CD8-positive, alpha-beta T cell (primary cell): ENCODE measurements at regions of chr19 and their contacts with region 1.

Region 1: GRCh38 chr19:39792999-39793546 is 14.4 kb downstream of the LEUTX start:
- DNase-seq: peak; percentile 52 to 83 (median 74)
- ATAC-seq: peak; percentile 94
- H3K4me3 ChIP-seq: peak overlapping the region; percentile 53 to 74
- H3K4me3 Mint-ChIP-seq: peak overlapping the region; percentile 76
- H3K27ac ChIP-seq: no peak overlapping the region
- H3K27ac Mint-ChIP-seq: no peak overlapping the region
- H3K4me1 ChIP-seq: no peaks in the 10 kb centered on the region
- H3K4me1 Mint-ChIP-seq: peaks cover 2% of the 10 kb centered on the region
- H3K27me3 ChIP-seq: no peaks in the 10 kb centered on the region
- H3K27me3 Mint-ChIP-seq: peaks cover 5% of the 10 kb centered on the region
- CTCF ChIP-seq: peak; percentile 85

Region 2: GRCh38 chr19:39824143-39825092 is 31.3 kb after region 1 on chr19:
- CTCF ChIA-PET with region 1: interaction called, 7 read pairs
- POLR2A ChIA-PET with region 1: no interaction called
- intact Hi-C with region 1: loop called (anchors 1 kb)
- DNase-seq: peak; percentile 72 to 94 (median 87)
- ATAC-seq: peak; percentile 98
- H3K4me3 ChIP-seq: peak overlapping the region; percentile 72 to 79
- H3K4me3 Mint-ChIP-seq: no peak overlapping the region
- H3K27ac ChIP-seq: peak overlapping the region; percentile 43 to 45
- H3K27ac Mint-ChIP-seq: no peak overlapping the region
- H3K4me1 ChIP-seq: peaks cover 27% of the 10 kb centered on the region
- H3K4me1 Mint-ChIP-seq: peaks cover 17% of the 10 kb centered on the region
- H3K27me3 ChIP-seq: no peaks in the 10 kb centered on the region
- H3K27me3 Mint-ChIP-seq: no peaks in the 10 kb centered on the region
- CTCF ChIP-seq: no peak

Region 3: DNA sequence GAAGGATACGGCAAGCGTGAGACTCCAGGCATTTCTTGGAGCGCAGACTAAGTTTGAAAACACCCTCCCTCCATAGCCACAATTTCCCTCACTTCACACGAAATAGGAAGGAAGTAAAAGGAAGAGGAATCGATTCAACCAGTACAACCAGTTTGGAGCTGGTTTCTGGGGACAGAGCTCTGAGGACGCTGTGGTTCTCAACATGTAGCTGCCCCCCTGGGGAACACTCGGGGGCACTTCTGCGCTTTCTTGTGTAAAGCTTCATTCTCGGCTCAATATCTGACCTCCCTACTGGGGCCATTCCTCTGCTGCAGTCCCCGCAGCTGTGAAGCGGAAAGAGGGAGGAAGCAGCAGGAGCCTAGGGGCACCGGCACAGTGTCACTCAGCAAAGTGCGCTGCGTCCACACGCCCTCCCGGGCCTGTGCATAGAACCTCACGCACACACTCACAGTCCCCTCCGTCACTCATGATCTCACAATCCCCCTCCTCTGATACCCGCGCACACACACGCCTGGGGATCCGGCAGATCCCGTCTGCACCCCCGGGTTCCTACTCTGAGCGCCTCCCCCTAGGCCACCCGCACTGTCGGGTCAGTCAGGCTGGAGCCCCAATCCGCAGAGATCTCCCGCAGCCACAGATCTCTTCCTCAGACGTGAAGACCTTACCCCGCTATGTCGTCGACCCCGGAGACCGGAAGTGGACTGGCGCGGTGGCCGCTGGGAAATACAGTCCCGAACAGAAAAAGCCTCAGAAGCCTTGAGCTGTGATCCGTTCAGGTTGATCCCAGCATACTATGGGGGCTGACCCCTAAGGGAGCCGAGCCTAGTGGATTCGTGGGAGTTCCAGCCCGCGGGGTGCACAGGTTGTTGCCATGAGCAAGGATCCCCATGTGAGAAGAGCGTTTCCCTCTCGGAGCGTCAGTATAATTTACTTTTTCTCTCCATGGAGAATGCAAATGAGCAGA is 297.4 kb after region 1 on chr19 and contains the start of gene ZNF780A:
- CTCF ChIA-PET with region 1: no interaction called
- POLR2A ChIA-PET with region 1: no interaction called
- intact Hi-C with region 1: loop called in 1 of 2 experiments (anchors 2 kb)
- DNase-seq: peak; percentile 55 to 87 (median 79)
- ATAC-seq: peak; percentile 94
- H3K4me3 ChIP-seq: peak within 1 kb of the TSS; percentile 83 to 99
- H3K4me3 Mint-ChIP-seq: peak within 1 kb of the TSS; percentile 100
- H3K27ac ChIP-seq: peak within 1 kb of the TSS; percentile 93 to 98
- H3K27ac Mint-ChIP-seq: peak within 1 kb of the TSS; percentile 100
- H3K4me1 ChIP-seq: peaks cover 24% of the 10 kb centered on the region
- H3K4me1 Mint-ChIP-seq: peaks cover 48% of the 10 kb centered on the region
- H3K27me3 ChIP-seq: peaks cover 0 to 4% of the 10 kb centered on the region in 2 experiments
- H3K27me3 Mint-ChIP-seq: peaks cover 7% of the 10 kb centered on the region
- CTCF ChIP-seq: no peak
- total RNA-seq, gene ZNF780A: 10.6 to 11.6 TPM

Region 4: GRCh38 chr19:40221858-40222837 is 429.1 kb after region 1 on chr19:
- CTCF ChIA-PET with region 1: interaction called, 4 read pairs
- POLR2A ChIA-PET with region 1: no interaction called
- intact Hi-C with region 1: loop called in 1 of 2 experiments (anchors 2 kb)
- DNase-seq: peak; percentile 47 to 91 (median 76)
- ATAC-seq: peak; percentile 77
- H3K4me3 ChIP-seq: no peak overlapping the region
- H3K4me3 Mint-ChIP-seq: no peak overlapping the region
- H3K27ac ChIP-seq: no peak overlapping the region
- H3K27ac Mint-ChIP-seq: no peak overlapping the region
- H3K4me1 ChIP-seq: peaks cover 21% of the 10 kb centered on the region
- H3K4me1 Mint-ChIP-seq: peaks cover 16% of the 10 kb centered on the region
- H3K27me3 ChIP-seq: peaks cover 39 to 42% of the 10 kb centered on the region in 2 experiments
- H3K27me3 Mint-ChIP-seq: peaks cover 49% of the 10 kb centered on the region
- CTCF ChIP-seq: peak; percentile 88